ENCODE measurements at regions of chr11 and their contacts with region 1.

Region 1: GRCh38 chr11:47485110-47485509 is 36.2 kb upstream of the RAPSN start:
- DNase-seq: no peak
- ATAC-seq: no peak
- H3K4me3 ChIP-seq: no peak overlapping the region
- H3K27ac ChIP-seq: no peak overlapping the region
- H3K4me1 ChIP-seq: peaks cover 0 to 25% (median 18%) of the 10 kb centered on the region in 9 donors
- H3K27me3 ChIP-seq: no peaks in the 10 kb centered on the region
- CTCF ChIP-seq: no peak

Region 2: DNA sequence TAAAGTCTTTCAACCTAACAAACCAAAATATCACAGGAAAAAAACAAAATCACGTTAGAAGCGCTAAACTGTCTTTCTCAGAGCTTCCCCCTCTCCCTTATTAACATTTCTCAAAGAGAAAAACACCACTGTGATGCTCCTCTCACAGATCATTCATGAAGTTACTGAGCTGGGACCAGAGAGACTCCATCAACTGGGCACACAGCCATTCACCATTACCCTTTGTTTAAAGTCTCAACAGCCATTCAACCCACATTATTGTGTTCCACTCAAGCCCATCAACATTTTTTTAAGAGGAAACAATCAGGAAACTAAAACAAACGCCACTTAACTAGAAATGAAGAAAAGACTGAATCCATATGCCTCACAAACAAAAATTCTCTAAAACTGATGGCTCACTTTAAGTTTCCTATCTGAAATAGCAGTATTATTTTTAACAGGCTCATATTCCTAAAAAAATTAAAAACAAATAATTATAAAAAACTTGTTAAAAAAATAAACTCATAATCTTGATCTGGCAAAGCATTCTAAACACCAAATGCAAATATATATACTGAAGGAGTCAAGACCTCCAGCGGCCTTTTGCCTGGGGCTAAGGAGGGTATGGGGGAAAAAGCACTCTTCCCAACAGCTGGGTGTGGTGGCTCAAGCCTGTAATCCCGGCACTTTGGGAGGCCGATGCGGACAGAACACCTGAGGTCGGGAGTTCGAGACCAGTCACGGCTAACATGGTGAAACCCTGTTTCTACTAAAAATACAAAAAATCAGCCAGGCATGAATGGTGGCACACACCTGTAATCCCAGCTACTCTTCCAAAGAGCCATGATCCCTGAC is 53.8 kb after region 1 on chr11:
- intact Hi-C with region 1: loop called in 2 of 10 experiments (anchors 5 to 10 kb)
- DNase-seq: no peak
- ATAC-seq: peak in 2 of 8 donors; percentile 34 to 39
- H3K4me3 ChIP-seq: no peak overlapping the region
- H3K27ac ChIP-seq: peak overlapping the region in 2 of 10 donors; percentile 44 to 54
- H3K4me1 ChIP-seq: peaks cover 12 to 93% (median 75%) of the 10 kb centered on the region in 9 donors
- H3K27me3 ChIP-seq: no peaks in the 10 kb centered on the region
- CTCF ChIP-seq: no peak

Region 3: GRCh38 chr11:48184446-48184845 is 699.3 kb after region 1 on chr11:
- intact Hi-C with region 1: no loop called
- DNase-seq: no peak
- ATAC-seq: no peak
- H3K4me3 ChIP-seq: no peak overlapping the region
- H3K27ac ChIP-seq: peak overlapping the region in 4 of 10 donors; percentile 9 to 91 (median 51)
- H3K4me1 ChIP-seq: peaks cover 0 to 5% (median 0%) of the 10 kb centered on the region in 9 donors
- H3K27me3 ChIP-seq: no peaks in the 10 kb centered on the region
- CTCF ChIP-seq: no peak